HEK293T (cell line): ENCODE measurements at regions of chr2 and their contacts with region 1.

Region 1: DNA sequence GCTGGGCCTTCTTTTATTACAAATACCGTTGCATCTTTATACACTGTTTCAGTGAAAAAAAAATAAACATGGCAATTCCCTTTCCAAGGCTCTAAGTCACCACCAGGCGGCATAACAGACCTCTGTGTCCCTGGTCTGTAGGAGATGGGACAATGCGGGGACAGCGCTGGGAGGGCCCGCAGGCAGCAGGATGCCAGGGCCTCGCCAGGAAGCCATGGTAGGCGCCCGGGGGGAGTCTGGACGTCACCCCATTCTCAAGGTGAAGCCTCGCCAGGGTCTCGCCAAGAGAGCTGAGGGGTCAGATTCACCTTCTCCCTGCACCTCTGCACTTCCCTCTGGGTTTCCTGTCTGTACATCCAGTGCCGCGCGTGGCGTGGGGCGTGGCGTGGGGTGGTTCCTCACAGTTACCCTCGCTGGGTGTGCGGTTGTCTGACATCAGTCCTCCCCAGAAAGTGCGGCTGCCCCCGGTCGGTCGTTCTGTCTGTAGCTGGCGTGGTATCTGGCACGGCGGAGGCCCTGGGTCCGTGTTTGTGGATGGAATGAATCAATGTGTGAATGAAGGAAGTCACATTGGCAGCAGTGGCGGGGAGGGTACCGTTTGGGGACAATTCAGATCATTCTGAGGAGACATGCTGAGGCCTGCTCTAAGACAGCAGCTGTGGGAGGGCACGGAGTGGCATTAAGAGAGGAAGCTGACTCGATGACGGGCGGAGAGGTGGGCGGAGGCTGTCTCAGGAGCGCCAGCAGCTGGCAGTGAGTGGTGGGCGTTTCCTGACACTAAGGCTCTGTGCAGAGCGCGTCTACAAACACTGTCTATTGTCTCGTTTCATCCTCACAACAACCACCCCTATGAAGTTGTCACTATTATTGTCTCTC is 46.0 kb downstream of the LRRFIP1 start:
- DNase-seq: peak; percentile 55

Region 2: GRCh38 chr2:237631007-237631785 is 42.2 kb before region 1 on chr2:
- CTCF ChIA-PET with region 1: no interaction called
- POLR2A ChIA-PET with region 1: no interaction called
- DNase-seq: no peak

Region 3: DNA sequence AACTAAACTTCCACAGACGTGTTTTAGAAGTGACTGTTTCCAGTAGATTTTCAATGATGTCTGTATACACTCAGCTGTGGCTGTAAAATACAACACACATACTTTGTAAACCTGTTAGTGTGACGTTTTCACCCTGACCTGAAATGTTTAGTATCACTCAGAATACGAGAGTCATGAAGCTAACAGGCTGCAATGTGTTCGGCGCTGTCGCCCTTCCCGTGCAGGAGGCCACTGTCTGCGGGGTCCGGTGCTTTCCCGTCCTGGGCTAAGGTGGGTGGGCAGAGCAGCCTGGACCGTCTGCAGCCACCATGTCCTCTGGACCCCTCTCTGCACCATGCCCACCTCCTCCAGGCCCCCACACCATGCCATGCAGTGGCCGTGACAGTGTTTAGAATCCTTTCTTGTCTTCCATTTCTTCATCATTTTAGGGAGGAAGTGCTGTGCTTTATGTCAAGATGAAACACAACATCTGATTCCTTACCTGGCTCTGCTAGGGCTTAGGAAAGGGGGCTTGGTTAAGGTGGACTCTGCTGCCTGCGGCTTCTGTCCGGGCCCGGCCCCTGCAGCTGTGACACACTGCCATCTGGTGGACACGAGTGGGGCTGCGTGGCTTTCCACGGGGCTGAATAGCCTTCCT is 71.4 kb after region 1 on chr2:
- CTCF ChIA-PET with region 1: interaction called, 11 read pairs
- POLR2A ChIA-PET with region 1: interaction called, 4 read pairs
- DNase-seq: peak; percentile 78